ENCODE measurements at regions of chr16 and their contacts with region 1.

Region 1: DNA sequence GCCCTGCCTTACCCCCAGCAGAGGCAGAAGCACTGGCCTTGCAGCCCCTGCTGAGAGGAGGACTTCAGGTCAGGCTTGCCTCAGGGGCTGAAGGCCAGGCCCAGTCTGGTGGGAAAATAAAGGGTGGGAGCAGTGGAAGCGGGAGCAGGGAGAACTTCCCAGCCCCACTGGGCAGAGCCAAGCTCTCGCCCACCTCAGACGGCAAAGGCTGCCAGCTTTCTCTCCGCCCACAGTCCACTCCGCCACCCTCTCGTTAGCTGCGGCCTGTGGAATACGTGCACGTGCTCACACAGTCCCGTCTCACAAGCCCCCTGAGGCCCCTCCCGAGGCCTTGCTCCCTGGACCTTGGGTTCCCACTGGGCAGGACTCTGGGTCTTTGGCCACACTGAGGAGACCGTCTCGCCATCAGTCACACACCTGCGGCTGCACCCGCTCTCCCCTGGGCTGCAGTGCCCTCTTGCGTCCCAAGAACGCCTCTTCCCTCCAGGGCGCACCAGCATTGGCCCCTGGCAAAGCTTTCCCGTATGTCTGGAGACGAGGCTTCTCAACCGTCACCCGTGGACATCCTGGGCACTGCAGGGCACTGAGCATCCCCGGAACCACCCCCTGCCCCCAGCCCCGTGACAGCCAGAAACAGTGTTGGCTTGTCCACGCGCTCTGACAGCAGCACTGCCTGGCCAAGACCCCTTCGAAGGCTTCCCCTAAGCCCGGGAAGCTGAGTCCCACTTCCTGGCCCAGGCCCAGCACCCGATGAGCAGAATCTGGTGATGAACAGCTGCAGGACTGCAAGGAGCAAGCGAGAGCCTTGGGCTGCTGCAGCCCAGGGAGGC is 8.3 kb downstream of the MRPL28 start:
- DNase-seq: peak; percentile 80
- ATAC-seq: peak; percentile 89
- H3K4me3 ChIP-seq: no peak overlapping the region
- H3K4me3 Mint-ChIP-seq: no peak overlapping the region
- H3K27ac ChIP-seq: no peak overlapping the region
- H3K27ac Mint-ChIP-seq: peak overlapping the region; percentile 13
- H3K4me1 ChIP-seq: peaks cover 0 to 8% of the 10 kb centered on the region in 2 donors
- H3K4me1 Mint-ChIP-seq: peaks cover 4% of the 10 kb centered on the region
- H3K27me3 ChIP-seq: peaks cover 0 to 10% (median 0%) of the 10 kb centered on the region in 4 experiments
- H3K27me3 Mint-ChIP-seq: peaks cover 5% of the 10 kb centered on the region
- CTCF ChIP-seq: peak; percentile 75

Region 2: GRCh38 chr16:106623-107324 is 255.3 kb before region 1 on chr16:
- CTCF ChIA-PET with region 1: interaction called, 63 read pairs
- POLR2A ChIA-PET with region 1: no interaction called
- intact Hi-C with region 1: loop called (anchors 1 kb)
- DNase-seq: peak; percentile 78
- ATAC-seq: peak; percentile 74
- H3K4me3 ChIP-seq: no peak overlapping the region
- H3K4me3 Mint-ChIP-seq: no peak overlapping the region
- H3K27ac ChIP-seq: no peak overlapping the region
- H3K27ac Mint-ChIP-seq: no peak overlapping the region
- H3K4me1 ChIP-seq: peaks cover 0 to 3% of the 10 kb centered on the region in 2 donors
- H3K4me1 Mint-ChIP-seq: peaks cover 3% of the 10 kb centered on the region
- H3K27me3 ChIP-seq: no peaks in the 10 kb centered on the region
- H3K27me3 Mint-ChIP-seq: no peaks in the 10 kb centered on the region
- CTCF ChIP-seq: peak; percentile 82

Region 3: DNA sequence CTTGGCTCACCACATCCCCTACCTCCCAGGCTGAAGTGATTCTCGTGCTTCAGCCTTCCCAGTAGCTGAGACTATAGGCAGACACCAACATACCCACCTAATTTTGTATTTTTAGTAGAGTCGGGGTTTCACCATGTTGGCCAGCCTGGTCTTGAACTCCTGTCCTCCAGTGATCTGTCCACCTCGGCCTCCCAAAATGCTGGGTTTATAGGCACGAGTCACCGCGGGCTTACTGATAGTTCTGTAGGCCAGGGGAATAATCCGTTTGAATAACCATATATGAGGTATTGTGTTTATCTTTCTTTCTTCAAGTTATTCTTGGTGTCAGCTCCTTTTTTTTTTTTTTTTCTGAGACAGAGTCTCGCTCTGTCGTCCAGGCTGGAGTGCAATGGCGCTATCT is 119.8 kb before region 1 on chr16:
- CTCF ChIA-PET with region 1: no interaction called
- POLR2A ChIA-PET with region 1: no interaction called
- intact Hi-C with region 1: no loop called
- DNase-seq: no peak
- ATAC-seq: no peak
- H3K4me3 ChIP-seq: no peak overlapping the region
- H3K4me3 Mint-ChIP-seq: no peak overlapping the region
- H3K27ac ChIP-seq: no peak overlapping the region
- H3K27ac Mint-ChIP-seq: no peak overlapping the region
- H3K4me1 ChIP-seq: peaks cover 0 to 3% of the 10 kb centered on the region in 2 donors
- H3K4me1 Mint-ChIP-seq: peaks cover 15% of the 10 kb centered on the region
- H3K27me3 ChIP-seq: no peaks in the 10 kb centered on the region
- H3K27me3 Mint-ChIP-seq: no peaks in the 10 kb centered on the region
- CTCF ChIP-seq: no peak

Region 4: GRCh38 chr16:339680-340079 is 22.4 kb before region 1 on chr16:
- CTCF ChIA-PET with region 1: no interaction called
- POLR2A ChIA-PET with region 1: no interaction called
- intact Hi-C with region 1: no loop called
- DNase-seq: peak; percentile 24
- ATAC-seq: peak; percentile 24
- H3K4me3 ChIP-seq: peak overlapping the region in 2 of 5 experiments; percentile 15 to 33
- H3K4me3 Mint-ChIP-seq: peak overlapping the region; percentile 73
- H3K27ac ChIP-seq: peak overlapping the region in 1 of 2 donors; percentile 30
- H3K27ac Mint-ChIP-seq: peak overlapping the region; percentile 20
- H3K4me1 ChIP-seq: peaks cover 18 to 36% of the 10 kb centered on the region in 2 donors
- H3K4me1 Mint-ChIP-seq: peaks cover 48% of the 10 kb centered on the region
- H3K27me3 ChIP-seq: no peaks in the 10 kb centered on the region
- H3K27me3 Mint-ChIP-seq: no peaks in the 10 kb centered on the region
- CTCF ChIP-seq: no peak